ENCODE measurements at regions of chr14 and their contacts with region 1.

Region 1: DNA sequence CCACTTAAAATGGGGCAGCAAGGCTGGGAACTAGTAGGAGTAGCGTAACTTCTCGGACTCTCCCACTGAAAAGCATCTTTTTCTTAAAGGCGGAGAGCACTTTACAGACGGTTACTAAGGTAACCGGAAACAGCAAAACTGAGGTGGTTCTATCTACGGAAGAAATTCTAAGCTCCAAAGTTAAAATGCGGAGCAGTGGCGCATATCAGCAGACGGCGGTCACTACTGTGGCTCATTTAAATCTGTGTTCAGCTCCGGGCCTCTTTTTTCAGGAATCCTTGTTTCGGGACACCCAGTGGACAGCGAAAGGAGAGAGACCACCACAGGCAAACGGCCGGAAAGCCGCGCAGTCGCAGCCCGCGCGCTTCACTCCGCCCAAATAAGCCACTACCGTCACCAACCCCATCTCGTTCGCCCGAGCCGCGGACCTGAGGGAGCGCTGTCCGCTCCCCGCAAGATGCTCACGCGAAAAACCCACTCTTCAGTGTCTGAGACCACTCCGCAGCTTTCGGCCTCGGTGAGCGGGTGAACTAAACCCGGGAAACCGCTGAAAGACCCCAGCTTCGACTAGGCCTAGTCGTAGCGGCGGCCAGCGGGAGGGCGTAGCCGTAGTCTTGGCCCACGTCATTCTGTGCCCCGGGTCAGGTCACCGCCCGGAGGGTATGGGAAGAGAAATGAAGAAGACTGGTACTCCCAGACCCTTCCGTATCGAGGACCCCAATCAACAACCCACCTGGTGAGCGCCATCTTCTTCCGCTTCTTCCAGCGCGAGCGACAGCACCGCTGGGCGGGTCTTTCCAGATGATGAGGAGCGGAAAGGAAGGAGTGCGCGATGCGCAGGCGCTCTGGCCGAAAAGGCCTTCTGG is at the start of gene SNW1:
- DNase-seq: peak; percentile 87
- H3K4me3 ChIP-seq: peak within 1 kb of the TSS; percentile 82 to 91 (median 89)
- H3K27ac ChIP-seq: peak within 1 kb of the TSS; percentile 88
- H3K4me1 ChIP-seq: peaks cover 7% of the 10 kb centered on the region
- H3K27me3 ChIP-seq: no peaks in the 10 kb centered on the region
- CTCF ChIP-seq: no peak
- total RNA-seq, gene SNW1: 31.0 to 92.5 TPM

Region 2: GRCh38 chr14:77707355-77707723 is 53.3 kb before region 1 on chr14:
- CTCF ChIA-PET with region 1: no interaction called
- dilution Hi-C with region 1: no loop called
- in situ Hi-C with region 1: no loop called
- intact Hi-C with region 1: no loop called
- DNase-seq: peak; percentile 41
- H3K4me3 ChIP-seq: peak overlapping the region; percentile 77 to 99 (median 92)
- H3K27ac ChIP-seq: peak overlapping the region; percentile 32
- H3K4me1 ChIP-seq: peaks cover 14% of the 10 kb centered on the region
- H3K27me3 ChIP-seq: no peaks in the 10 kb centered on the region
- CTCF ChIP-seq: peak; percentile 22 to 71

Region 3: DNA sequence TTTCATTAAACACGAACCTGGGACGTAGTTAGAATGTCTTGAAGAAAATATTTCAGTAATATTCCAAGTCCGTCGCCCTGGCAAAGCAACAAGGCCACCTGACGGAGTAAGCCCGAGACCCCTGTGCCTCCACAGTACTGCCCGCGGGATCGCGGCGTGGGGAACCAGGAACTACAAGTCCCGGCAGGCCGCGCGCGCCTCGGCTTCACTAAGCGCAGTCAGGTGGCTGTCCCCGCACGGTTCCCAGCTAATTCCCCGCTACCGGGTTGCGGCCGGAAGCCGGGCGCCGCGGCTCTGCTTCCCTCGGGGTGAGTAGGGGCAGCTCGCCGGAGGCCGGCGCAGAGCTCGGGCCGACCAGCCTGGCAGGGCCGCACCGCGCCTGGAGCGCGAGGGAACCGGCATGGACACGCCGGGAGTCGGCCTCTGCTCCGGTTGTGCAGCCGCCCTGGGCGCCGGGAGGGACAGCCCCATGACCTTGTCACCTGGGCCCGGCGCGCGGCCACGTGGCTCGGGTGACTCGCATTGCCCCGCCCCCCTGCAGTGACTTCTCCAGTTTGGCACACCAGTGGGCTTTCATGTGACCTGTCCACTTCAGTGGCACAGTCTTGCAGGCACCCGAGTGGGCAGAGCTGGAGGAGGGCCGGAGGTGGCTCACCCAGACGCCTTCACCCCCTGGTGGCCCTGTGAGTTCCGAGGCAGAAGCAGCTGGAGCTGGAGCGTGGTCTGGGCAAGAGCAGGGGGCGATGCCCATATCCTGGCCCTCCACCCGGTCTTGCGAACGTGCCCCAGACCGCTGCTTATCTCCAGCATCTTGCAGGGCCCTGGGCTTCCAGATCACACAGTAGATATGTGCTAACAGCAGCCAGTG is 39.5 kb after region 1 on chr14 and contains the start of gene ADCK1:
- CTCF ChIA-PET with region 1: no interaction called
- dilution Hi-C with region 1: no loop called
- in situ Hi-C with region 1: no loop called
- intact Hi-C with region 1: loop called (anchors 1 kb)
- DNase-seq: peak; percentile 70
- H3K4me3 ChIP-seq: peak within 1 kb of the TSS; percentile 37 to 69 (median 64)
- H3K27ac ChIP-seq: peak within 1 kb of the TSS; percentile 32
- H3K4me1 ChIP-seq: peaks cover 6% of the 10 kb centered on the region
- H3K27me3 ChIP-seq: no peaks in the 10 kb centered on the region
- CTCF ChIP-seq: peak in 1 of 2 donors; percentile 57
- total RNA-seq, gene ADCK1: 5.7 to 8.5 TPM

Region 4: GRCh38 chr14:77980475-77981321 is 220.1 kb after region 1 on chr14:
- CTCF ChIA-PET with region 1: no interaction called
- dilution Hi-C with region 1: no loop called
- in situ Hi-C with region 1: no loop called
- intact Hi-C with region 1: loop called (anchors 10 kb)
- DNase-seq: peak; percentile 35
- H3K4me3 ChIP-seq: peak overlapping the region; percentile 43 to 50 (median 48)
- H3K27ac ChIP-seq: no peak overlapping the region
- H3K4me1 ChIP-seq: no peaks in the 10 kb centered on the region
- H3K27me3 ChIP-seq: no peaks in the 10 kb centered on the region
- CTCF ChIP-seq: no peak

Measured in mammary epithelial cell (primary cell).